Endothelial cell of umbilical vein (primary cell): ENCODE measurements at regions of chr1 and their contacts with region 1.

Region 1: DNA sequence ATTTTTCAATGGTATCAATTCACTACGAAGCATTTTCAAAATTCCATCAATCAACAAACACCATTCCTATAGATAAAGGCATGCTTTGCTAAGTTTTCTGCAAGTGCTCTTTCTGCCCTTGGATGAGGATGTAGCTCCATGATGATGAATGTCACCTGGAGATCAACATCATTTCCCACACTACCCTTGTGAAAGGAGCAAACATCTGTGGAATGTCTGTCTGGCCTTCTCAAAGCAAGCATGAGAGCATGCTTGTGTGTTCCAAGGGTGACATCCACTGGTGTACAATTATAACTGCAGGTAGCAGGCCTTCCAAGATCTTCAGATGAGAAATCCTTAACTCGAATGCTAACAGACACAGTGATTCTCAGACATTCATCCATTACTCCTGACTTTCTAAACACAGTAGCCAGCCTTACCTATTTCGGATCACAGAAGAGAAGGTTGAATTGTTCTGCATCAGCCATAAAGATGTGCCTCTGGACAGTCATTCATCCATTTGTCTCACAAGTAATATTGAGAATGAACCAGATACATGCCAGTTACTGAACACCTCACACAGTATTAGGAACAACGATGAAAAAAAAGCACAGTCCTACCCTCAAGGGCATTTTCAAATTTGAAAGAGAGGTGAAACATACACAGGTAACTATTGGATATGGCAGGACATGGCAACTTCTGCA is 162.4 kb downstream of the TPR start:
- DNase-seq: peak; percentile 88
- H3K4me3 ChIP-seq: no peak overlapping the region
- H3K27ac ChIP-seq: no peak overlapping the region
- H3K4me1 ChIP-seq: peaks cover 4% of the 10 kb centered on the region
- H3K27me3 ChIP-seq: no peaks in the 10 kb centered on the region
- CTCF ChIP-seq: peak; percentile 73 to 77
- POLR2A ChIP-seq: no peak

Region 2: GRCh38 chr1:185681034-185681633 is 531.6 kb before region 1 on chr1:
- CTCF ChIA-PET with region 1: interaction called, 7 read pairs
- POLR2A ChIA-PET with region 1: no interaction called
- dilution Hi-C with region 1: no loop called
- intact Hi-C with region 1: loop called (anchors 1 kb)
- DNase-seq: peak; percentile 64
- H3K4me3 ChIP-seq: no peak overlapping the region
- H3K27ac ChIP-seq: no peak overlapping the region
- H3K4me1 ChIP-seq: peaks cover 8% of the 10 kb centered on the region
- H3K27me3 ChIP-seq: no peaks in the 10 kb centered on the region
- CTCF ChIP-seq: peak; percentile 48 to 50
- POLR2A ChIP-seq: no peak

Region 3: GRCh38 chr1:185813401-185813979 is 399.2 kb before region 1 on chr1:
- CTCF ChIA-PET with region 1: interaction called, 38 read pairs
- POLR2A ChIA-PET with region 1: no interaction called
- dilution Hi-C with region 1: no loop called
- intact Hi-C with region 1: loop called (anchors 1 kb)
- DNase-seq: peak; percentile 80
- H3K4me3 ChIP-seq: no peak overlapping the region
- H3K27ac ChIP-seq: no peak overlapping the region
- H3K4me1 ChIP-seq: no peaks in the 10 kb centered on the region
- H3K27me3 ChIP-seq: no peaks in the 10 kb centered on the region
- CTCF ChIP-seq: peak; percentile 26 to 40
- POLR2A ChIP-seq: no peak

Region 4: GRCh38 chr1:186102557-186103148 is 110.0 kb before region 1 on chr1:
- CTCF ChIA-PET with region 1: no interaction called
- POLR2A ChIA-PET with region 1: no interaction called
- dilution Hi-C with region 1: no loop called
- intact Hi-C with region 1: loop called (anchors 1 kb)
- DNase-seq: peak; percentile 96
- H3K4me3 ChIP-seq: peak overlapping the region in 2 of 3 experiments; percentile 22 to 50
- H3K27ac ChIP-seq: peak overlapping the region; percentile 84
- H3K4me1 ChIP-seq: peaks cover 19% of the 10 kb centered on the region
- H3K27me3 ChIP-seq: no peaks in the 10 kb centered on the region
- CTCF ChIP-seq: no peak
- POLR2A ChIP-seq: no peak